SK-N-SH (cell line): ENCODE measurements at regions of chr7 and their contacts with region 1.

Region 1: DNA sequence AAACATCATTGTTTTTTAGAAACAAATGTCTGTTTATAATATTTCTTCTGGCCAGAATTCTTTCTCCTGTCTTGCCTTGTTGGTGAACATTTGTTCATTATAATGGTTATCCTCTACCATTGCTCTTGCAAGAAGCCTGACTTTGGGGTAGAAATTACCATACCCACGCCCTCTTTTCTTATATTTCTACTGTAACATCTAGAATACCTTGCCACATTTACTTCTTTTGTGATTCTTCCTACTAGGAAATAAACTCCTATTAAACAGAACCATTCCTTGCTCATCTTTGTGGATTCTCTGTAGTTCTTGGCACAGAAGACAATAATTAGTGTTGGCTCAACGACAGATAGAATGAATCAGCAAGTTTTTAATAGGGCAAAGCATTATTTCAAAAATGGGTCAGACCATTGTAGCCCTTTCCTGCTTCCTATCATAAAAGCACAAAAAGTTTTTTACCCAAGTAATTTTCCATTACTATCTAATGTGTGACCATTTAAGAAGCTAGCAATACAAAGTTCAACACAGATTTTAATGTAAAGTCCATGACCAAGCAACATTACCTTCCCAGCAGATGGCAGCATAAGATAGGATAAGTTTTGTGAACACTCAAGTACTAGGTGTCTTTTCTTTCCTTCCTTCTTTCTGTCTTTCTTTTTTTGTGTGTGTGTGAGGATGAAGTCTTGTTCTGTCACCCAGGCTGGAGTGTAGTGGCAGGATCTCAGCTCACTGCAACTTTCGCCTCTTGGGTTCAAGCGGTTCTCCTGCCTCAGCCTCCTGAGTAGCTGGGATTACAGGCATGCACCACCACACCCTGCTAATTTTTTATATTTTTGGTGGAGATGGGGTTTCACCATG is 270.4 kb downstream of the HGF start:
- DNase-seq: peak; percentile 47
- H3K4me3 ChIP-seq: no peak overlapping the region
- H3K27ac ChIP-seq: peak overlapping the region; percentile 75 to 84
- H3K4me1 ChIP-seq: peaks cover 8 to 9% of the 10 kb centered on the region in 2 experiments; a peak in 1 of 4 replicates
- H3K27me3 ChIP-seq: no peaks in the 10 kb centered on the region
- CTCF ChIP-seq: peak; percentile 99
- EP300 ChIP-seq: peak in 1 of 2 experiments; percentile 53; a peak in 2 of 4 replicates
- RAD21 ChIP-seq: peak; percentile 95

Region 2: GRCh38 chr7:81383848-81384247 is 115.6 kb before region 1 on chr7:
- CTCF ChIA-PET with region 1: no interaction called
- POLR2A ChIA-PET with region 1: no interaction called
- DNase-seq: no peak
- H3K4me3 ChIP-seq: no peak overlapping the region
- H3K27ac ChIP-seq: no peak overlapping the region
- H3K4me1 ChIP-seq: no peaks in the 10 kb centered on the region; a peak in 2 of 4 replicates
- H3K27me3 ChIP-seq: no peaks in the 10 kb centered on the region
- CTCF ChIP-seq: no peak
- EP300 ChIP-seq: 0 out of 4 replicates have a peak, but pooled peaks of 1 of the 2 experiments have one; percentile 29
- RAD21 ChIP-seq: no peak

Region 3: GRCh38 chr7:81447351-81447952 is 52.0 kb before region 1 on chr7:
- CTCF ChIA-PET with region 1: no interaction called
- POLR2A ChIA-PET with region 1: no interaction called
- DNase-seq: peak; percentile 50
- H3K4me3 ChIP-seq: no peak overlapping the region
- H3K27ac ChIP-seq: no peak overlapping the region
- H3K4me1 ChIP-seq: no peaks in the 10 kb centered on the region; a peak in 1 of 4 replicates
- H3K27me3 ChIP-seq: no peaks in the 10 kb centered on the region
- CTCF ChIP-seq: peak; percentile 79
- EP300 ChIP-seq: no peak
- RAD21 ChIP-seq: peak; percentile 97

Region 4: DNA sequence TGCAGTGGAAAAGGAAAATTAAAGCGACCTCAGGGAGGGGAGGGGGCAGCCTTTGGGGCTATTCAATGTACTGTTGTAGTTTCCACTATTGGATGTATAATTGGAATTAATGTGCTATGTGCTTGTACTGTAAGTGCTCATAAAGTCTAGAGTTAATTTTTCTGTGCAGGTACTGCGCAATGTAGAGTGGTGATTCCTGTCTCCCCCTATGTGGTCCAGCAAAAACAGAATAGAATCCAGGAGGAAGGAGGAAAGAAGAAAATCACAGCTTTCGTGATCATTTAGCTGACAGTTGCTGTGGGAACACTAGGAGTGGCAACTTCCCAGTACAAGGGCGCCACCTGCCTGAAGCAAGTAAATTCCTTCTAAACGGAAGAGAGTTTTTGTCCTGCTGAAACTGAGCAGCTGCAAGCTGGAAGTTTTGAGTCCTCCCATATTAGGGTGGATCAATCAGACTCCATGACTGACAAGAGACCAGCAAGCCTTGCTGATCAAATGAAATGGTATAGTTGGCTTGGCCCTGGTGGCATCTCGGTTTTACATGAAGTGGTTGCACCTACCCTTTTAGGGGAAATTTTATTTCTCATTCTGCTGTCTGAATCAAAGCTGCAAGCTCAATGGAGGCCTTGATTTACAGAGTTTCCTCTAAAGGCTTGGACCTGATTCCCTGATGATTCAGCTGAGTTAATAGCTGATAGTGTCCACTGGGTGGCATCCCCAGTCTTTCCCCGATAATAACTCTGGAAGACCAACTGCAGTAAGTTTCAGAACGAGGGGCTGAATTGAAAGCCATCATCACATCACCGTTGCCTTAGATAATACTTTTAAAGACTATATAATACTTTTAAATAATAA is 29.4 kb before region 1 on chr7:
- CTCF ChIA-PET with region 1: interaction called, 16 read pairs
- POLR2A ChIA-PET with region 1: no interaction called
- DNase-seq: peak; percentile 53
- H3K4me3 ChIP-seq: no peak overlapping the region
- H3K27ac ChIP-seq: peak overlapping the region in 1 of 2 experiments; percentile 16; a peak in 1 of 4 replicates
- H3K4me1 ChIP-seq: peaks cover 0 to 10% of the 10 kb centered on the region in 2 experiments; a peak in 2 of 4 replicates
- H3K27me3 ChIP-seq: no peaks in the 10 kb centered on the region
- CTCF ChIP-seq: peak; percentile 92
- EP300 ChIP-seq: no peak
- RAD21 ChIP-seq: peak; percentile 98

Region 5: GRCh38 chr7:81600608-81601007 is 101.1 kb after region 1 on chr7:
- CTCF ChIA-PET with region 1: no interaction called
- POLR2A ChIA-PET with region 1: no interaction called
- DNase-seq: no peak
- H3K4me3 ChIP-seq: no peak overlapping the region
- H3K27ac ChIP-seq: peak overlapping the region in 1 of 2 experiments; percentile 66; a peak in 2 of 4 replicates
- H3K4me1 ChIP-seq: peaks cover 0 to 11% of the 10 kb centered on the region in 2 experiments; a peak in 2 of 4 replicates
- H3K27me3 ChIP-seq: no peaks in the 10 kb centered on the region
- CTCF ChIP-seq: no peak
- EP300 ChIP-seq: peak; percentile 66 to 81; a peak in 3 of 4 replicates
- RAD21 ChIP-seq: no peak

Region 6: DNA sequence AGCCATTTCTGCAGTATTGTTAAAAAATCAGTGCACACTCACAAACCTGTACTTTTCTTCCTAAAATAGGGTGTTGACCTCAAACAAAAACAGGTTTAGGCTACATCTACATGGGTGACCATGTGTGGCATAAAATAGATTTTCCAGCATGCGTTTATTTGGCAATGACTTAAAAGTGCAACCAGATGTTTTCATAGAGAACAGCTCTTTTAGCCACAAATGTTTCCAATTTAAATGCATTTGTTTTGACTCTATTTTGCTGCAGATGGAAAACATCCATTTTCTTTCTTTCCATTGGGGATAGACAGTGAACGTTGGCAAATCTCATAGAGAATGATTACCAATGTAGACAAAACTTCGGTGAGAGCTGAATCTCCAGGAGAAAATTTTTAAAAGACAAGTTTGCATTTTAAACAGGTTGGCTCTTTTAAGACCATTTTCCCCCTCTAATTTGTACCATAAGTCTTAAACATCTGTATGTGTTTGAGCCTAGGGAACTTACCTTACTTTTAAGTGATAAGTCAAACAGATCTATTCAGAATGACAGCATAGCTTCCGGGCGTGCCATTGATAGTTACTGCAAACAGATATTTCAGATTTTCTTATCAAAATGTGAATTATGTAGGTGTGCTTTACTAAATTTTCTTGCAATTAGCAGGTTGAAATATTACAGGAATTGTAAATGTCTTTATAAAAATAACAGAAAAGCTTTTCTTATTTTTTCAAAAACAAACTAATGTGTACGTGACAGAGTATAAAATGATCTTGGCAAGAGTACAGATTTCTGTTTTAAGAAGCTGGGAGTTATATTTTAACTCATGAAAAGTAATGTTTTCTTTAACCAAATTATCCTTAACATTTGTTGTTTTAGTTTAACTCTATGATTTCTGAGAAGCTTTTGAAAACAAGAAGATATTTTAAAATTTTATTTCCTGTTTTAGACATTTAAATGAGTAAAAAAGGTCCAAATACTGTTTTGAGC is 125.5 kb after region 1 on chr7:
- CTCF ChIA-PET with region 1: interaction called, 22 read pairs
- POLR2A ChIA-PET with region 1: no interaction called
- DNase-seq: peak; percentile 23
- H3K4me3 ChIP-seq: no peak overlapping the region
- H3K27ac ChIP-seq: peak overlapping the region; percentile 94 to 97
- H3K4me1 ChIP-seq: peaks cover 45% of the 10 kb centered on the region in 2 experiments
- H3K27me3 ChIP-seq: no peaks in the 10 kb centered on the region
- CTCF ChIP-seq: no peak
- EP300 ChIP-seq: peak; percentile 7 to 93; a peak in 2 of 4 replicates
- RAD21 ChIP-seq: no peak; the same call in 1 of the 2 replicates

Region 7: DNA sequence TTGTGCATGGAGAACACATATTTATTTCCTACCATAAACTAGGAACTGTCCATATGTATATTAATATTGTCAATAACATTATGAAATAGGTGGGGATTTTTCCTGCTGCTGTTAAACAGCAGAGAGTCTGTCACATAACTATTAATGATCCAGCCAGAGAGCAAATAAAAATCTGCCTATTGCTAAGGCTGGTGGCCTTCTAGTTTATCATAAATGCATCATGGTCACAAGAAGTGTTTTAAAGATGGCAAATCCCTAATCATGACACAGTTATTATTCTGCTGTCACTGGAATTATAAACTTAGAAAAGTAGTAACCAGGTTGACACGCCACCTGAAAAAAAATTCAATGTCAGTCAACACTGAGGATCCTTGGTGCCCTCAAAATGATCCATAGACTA is 138.0 kb after region 1 on chr7:
- CTCF ChIA-PET with region 1: no interaction called
- POLR2A ChIA-PET with region 1: no interaction called
- DNase-seq: no peak
- H3K4me3 ChIP-seq: no peak overlapping the region
- H3K27ac ChIP-seq: peak overlapping the region in 1 of 2 experiments; percentile 98; a peak in 3 of 4 replicates
- H3K4me1 ChIP-seq: peaks cover 8 to 38% of the 10 kb centered on the region in 2 experiments; a peak in 2 of 4 replicates
- H3K27me3 ChIP-seq: no peaks in the 10 kb centered on the region
- CTCF ChIP-seq: no peak
- EP300 ChIP-seq: no peak
- RAD21 ChIP-seq: no peak

Region 8: GRCh38 chr7:81715984-81716588 is 216.6 kb after region 1 on chr7:
- CTCF ChIA-PET with region 1: interaction called, 72 read pairs
- POLR2A ChIA-PET with region 1: no interaction called
- DNase-seq: peak; percentile 28
- H3K4me3 ChIP-seq: no peak overlapping the region
- H3K27ac ChIP-seq: peak overlapping the region in 1 of 2 experiments; percentile 28; a peak in 1 of 4 replicates
- H3K4me1 ChIP-seq: peaks cover 0 to 5% of the 10 kb centered on the region in 2 experiments; a peak in 2 of 4 replicates
- H3K27me3 ChIP-seq: no peaks in the 10 kb centered on the region
- CTCF ChIP-seq: peak; percentile 67
- EP300 ChIP-seq: 0 out of 4 replicates have a peak, but pooled peaks of 1 of the 2 experiments have one; percentile 44
- RAD21 ChIP-seq: peak; percentile 97

Region 9: GRCh38 chr7:82017334-82017943 is 518.0 kb after region 1 on chr7:
- CTCF ChIA-PET with region 1: interaction called, 182 read pairs
- POLR2A ChIA-PET with region 1: no interaction called
- DNase-seq: peak; percentile 33
- H3K4me3 ChIP-seq: no peak overlapping the region
- H3K27ac ChIP-seq: peak overlapping the region in 1 of 2 experiments; percentile 28; a peak in 2 of 4 replicates
- H3K4me1 ChIP-seq: peaks cover 13 to 19% of the 10 kb centered on the region in 2 experiments
- H3K27me3 ChIP-seq: no peaks in the 10 kb centered on the region
- CTCF ChIP-seq: peak; percentile 94
- EP300 ChIP-seq: no peak
- RAD21 ChIP-seq: peak; percentile 92

Region 10: DNA sequence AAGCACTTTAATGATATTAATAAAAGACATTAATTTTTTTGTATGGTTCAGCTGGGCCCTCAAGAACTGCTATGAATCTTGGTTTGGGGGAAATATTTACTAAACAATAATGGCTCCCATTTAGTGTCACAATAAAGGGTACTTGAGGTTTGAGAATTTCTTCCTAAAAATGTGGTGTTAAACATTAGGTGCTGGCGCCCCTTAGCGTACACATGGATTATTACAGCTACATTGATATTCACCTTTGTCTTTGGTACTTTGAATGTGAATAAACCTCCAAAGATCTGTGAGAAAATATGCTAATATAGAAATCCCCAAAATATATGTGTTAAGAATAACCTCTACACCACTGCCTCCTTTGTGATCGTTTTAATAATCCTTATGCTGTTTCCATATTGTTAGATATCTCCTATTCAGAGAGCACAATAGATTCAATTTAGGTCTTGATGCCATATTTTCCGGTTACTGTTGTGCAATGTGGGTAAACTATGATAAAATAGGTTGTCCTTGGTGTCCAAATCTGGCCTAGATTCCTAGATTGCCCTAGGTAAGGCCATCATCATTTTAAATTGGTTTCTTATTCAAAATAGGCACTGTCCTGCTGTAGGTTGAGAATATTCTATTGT is 1105.9 kb after region 1 on chr7:
- CTCF ChIA-PET with region 1: interaction called, 54 read pairs
- POLR2A ChIA-PET with region 1: no interaction called
- DNase-seq: peak; percentile 65
- H3K4me3 ChIP-seq: no peak overlapping the region; a peak in 1 of 4 replicates
- H3K27ac ChIP-seq: no peak overlapping the region
- H3K4me1 ChIP-seq: no peaks in the 10 kb centered on the region
- H3K27me3 ChIP-seq: no peaks in the 10 kb centered on the region
- CTCF ChIP-seq: peak; percentile 99
- EP300 ChIP-seq: 0 out of 4 replicates have a peak, but pooled peaks of 1 of the 2 experiments have one; percentile 6
- RAD21 ChIP-seq: peak; percentile 96